ENCODE measurements at regions of chr3 and their contacts with region 1.

Region 1: DNA sequence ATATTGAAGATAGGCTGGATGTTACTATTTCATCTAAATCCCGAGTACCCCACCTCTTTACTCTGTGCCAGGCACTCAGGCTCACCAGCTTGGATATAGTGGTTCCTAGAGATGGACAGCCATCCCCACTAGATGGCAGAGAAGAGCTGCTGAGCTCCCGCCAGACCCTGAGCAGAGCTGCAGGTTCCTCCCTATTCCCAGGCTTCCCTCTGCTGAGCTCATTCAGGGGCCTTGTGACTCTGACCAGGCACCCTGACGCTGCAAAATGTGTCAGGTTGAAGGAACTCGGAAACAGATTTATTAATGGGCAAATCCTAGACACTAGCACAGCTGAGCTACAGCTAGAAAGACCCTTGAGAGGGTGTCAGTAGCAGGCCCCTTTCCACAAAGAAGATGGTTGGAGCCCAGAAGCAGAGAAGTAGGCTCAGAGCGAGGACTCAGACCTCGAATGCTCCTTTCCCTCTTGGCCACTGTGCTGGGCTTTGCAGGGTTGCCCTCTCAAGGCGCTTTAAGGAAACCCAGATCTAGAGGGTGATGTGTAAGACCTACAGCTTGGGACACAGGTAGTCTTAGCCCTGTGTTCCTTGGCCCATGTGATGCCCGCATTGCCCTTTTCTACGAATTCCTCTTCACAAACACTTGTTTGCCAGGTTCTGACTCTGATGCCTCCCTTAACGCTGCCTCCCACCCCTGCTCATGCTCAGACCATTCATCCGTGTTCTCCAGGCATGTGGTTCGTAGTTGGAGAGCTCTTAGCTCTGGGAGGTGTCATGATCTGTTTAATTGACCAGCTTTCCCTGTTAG is 38.0 kb upstream of the RHO start:
- DNase-seq: peak; percentile 76
- ATAC-seq: peak; percentile 99
- H3K4me3 ChIP-seq: no peak overlapping the region
- H3K4me3 Mint-ChIP-seq: no peak overlapping the region
- H3K27ac ChIP-seq: no peak overlapping the region
- H3K27ac Mint-ChIP-seq: no peak overlapping the region
- H3K4me1 ChIP-seq: peaks cover 0 to 3% of the 10 kb centered on the region in 2 donors
- H3K4me1 Mint-ChIP-seq: peaks cover 2% of the 10 kb centered on the region
- H3K27me3 ChIP-seq: no peaks in the 10 kb centered on the region
- H3K27me3 Mint-ChIP-seq: no peaks in the 10 kb centered on the region
- CTCF ChIP-seq: peak; percentile 87

Region 2: DNA sequence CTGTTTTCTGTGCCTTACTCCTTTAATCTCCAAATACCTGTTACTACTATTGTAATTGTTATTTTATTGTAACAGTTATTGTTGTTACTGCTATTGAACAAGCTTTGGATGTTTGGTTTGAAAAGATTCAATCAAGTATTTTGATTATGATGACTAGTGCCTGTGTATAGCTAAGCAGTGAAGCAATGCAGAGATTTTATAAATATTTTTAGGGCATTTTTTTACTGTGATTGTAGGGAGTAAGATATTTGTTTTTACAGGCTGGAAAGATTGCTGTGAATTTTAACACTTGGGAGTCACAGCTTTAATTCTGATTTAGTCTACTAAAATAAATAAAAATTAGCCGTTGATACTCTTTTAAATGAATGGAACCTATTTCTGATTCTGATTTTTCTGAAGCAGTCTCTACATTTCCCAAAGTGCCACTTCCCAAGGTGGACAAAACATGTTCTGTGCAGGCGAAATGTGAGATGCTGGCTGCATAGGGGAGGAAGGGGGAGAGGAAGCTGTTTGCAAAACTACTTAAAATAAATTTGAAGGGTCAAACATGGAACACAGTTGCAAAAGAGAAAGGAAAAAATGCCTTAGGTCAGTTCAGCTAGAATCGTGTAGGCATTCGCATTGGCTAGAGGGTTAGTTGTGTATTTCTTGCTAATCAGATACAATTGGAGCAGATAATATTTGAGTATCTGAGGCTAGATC is 1311.5 kb before region 1 on chr3:
- CTCF ChIA-PET with region 1: no interaction called
- POLR2A ChIA-PET with region 1: no interaction called
- intact Hi-C with region 1: no loop called
- DNase-seq: no peak
- ATAC-seq: no peak
- H3K4me3 ChIP-seq: no peak overlapping the region
- H3K4me3 Mint-ChIP-seq: no peak overlapping the region
- H3K27ac ChIP-seq: no peak overlapping the region
- H3K27ac Mint-ChIP-seq: no peak overlapping the region
- H3K4me1 ChIP-seq: peaks cover 4 to 5% of the 10 kb centered on the region in 2 donors
- H3K4me1 Mint-ChIP-seq: peaks cover 30% of the 10 kb centered on the region
- H3K27me3 ChIP-seq: no peaks in the 10 kb centered on the region
- H3K27me3 Mint-ChIP-seq: no peaks in the 10 kb centered on the region
- CTCF ChIP-seq: no peak

Region 3: DNA sequence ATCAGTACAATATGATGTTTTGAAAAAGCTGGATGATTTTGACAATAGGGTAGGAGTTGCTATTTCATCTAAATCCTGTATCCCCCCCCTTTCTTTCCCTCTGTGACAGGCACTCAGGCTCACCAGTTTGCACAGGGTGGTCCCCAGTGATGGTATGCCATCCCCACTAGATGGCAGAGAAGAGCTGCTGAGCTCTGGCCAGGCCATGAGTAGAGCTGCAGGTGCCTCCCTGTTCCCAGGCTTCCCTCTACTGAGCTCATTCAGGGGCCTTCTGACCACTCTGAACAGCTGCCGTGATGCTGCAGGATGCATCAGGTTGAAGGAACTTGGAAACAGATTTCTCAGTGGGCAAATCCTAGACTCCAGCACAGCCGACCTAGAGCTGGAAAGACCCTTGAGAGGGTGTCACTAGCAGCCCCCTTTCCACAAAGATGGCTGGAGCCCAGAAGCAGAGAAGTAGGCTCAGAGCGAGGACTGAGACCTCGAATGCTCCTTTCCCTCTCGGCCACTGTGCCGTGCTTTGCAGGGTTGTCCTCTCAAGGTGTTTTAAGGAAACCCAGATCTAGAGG is 107.1 kb before region 1 on chr3:
- CTCF ChIA-PET with region 1: interaction called, 23 read pairs
- POLR2A ChIA-PET with region 1: no interaction called
- intact Hi-C with region 1: no loop called
- DNase-seq: peak; percentile 61
- ATAC-seq: peak; percentile 93
- H3K4me3 ChIP-seq: no peak overlapping the region
- H3K4me3 Mint-ChIP-seq: no peak overlapping the region
- H3K27ac ChIP-seq: no peak overlapping the region
- H3K27ac Mint-ChIP-seq: no peak overlapping the region
- H3K4me1 ChIP-seq: no peaks in the 10 kb centered on the region
- H3K4me1 Mint-ChIP-seq: no peaks in the 10 kb centered on the region
- H3K27me3 ChIP-seq: no peaks in the 10 kb centered on the region
- H3K27me3 Mint-ChIP-seq: no peaks in the 10 kb centered on the region
- CTCF ChIP-seq: peak; percentile 78

Region 4: GRCh38 chr3:129576514-129577352 is 86.3 kb after region 1 on chr3:
- CTCF ChIA-PET with region 1: interaction called, 30 read pairs
- POLR2A ChIA-PET with region 1: no interaction called
- intact Hi-C with region 1: loop called (anchors 5 kb)
- DNase-seq: peak; percentile 85
- ATAC-seq: peak; percentile 71
- H3K4me3 ChIP-seq: peak overlapping the region in 1 of 5 experiments; percentile 40
- H3K4me3 Mint-ChIP-seq: peak overlapping the region; percentile 83
- H3K27ac ChIP-seq: peak overlapping the region; percentile 69 to 83
- H3K27ac Mint-ChIP-seq: peak overlapping the region; percentile 98
- H3K4me1 ChIP-seq: peaks cover 50 to 59% of the 10 kb centered on the region in 2 donors
- H3K4me1 Mint-ChIP-seq: peaks cover 70% of the 10 kb centered on the region
- H3K27me3 ChIP-seq: no peaks in the 10 kb centered on the region
- H3K27me3 Mint-ChIP-seq: no peaks in the 10 kb centered on the region
- CTCF ChIP-seq: no peak

Region 5: GRCh38 chr3:129606636-129607390 is 116.4 kb after region 1 on chr3 and contains the start of gene PLXND1:
- CTCF ChIA-PET with region 1: interaction called, 20 read pairs
- POLR2A ChIA-PET with region 1: interaction called, 3 read pairs
- intact Hi-C with region 1: loop called (anchors 1 kb)
- DNase-seq: peak; percentile 57
- ATAC-seq: peak; percentile 78
- H3K4me3 ChIP-seq: peak within 1 kb of the TSS in 4 of 5 experiments; percentile 48 to 55 (median 53)
- H3K4me3 Mint-ChIP-seq: peak within 1 kb of the TSS; percentile 95
- H3K27ac ChIP-seq: no peak within 1 kb of the TSS
- H3K27ac Mint-ChIP-seq: peak within 1 kb of the TSS; percentile 89
- H3K4me1 ChIP-seq: peaks cover 16 to 19% of the 10 kb centered on the region in 2 donors
- H3K4me1 Mint-ChIP-seq: peaks cover 18% of the 10 kb centered on the region
- H3K27me3 ChIP-seq: peaks cover 0 to 37% (median 14%) of the 10 kb centered on the region in 4 experiments
- H3K27me3 Mint-ChIP-seq: peaks cover 20% of the 10 kb centered on the region
- CTCF ChIP-seq: no peak
- total RNA-seq, gene PLXND1: 74.4 and 89.8 TPM in 2 replicates

Region 6: GRCh38 chr3:129650256-129650872 is 159.9 kb after region 1 on chr3:
- CTCF ChIA-PET with region 1: interaction called, 21 read pairs
- POLR2A ChIA-PET with region 1: no interaction called
- intact Hi-C with region 1: loop called (anchors 1 kb)
- DNase-seq: peak; percentile 65
- ATAC-seq: peak; percentile 43
- H3K4me3 ChIP-seq: no peak overlapping the region
- H3K4me3 Mint-ChIP-seq: no peak overlapping the region
- H3K27ac ChIP-seq: no peak overlapping the region
- H3K27ac Mint-ChIP-seq: no peak overlapping the region
- H3K4me1 ChIP-seq: no peaks in the 10 kb centered on the region
- H3K4me1 Mint-ChIP-seq: peaks cover 2% of the 10 kb centered on the region
- H3K27me3 ChIP-seq: no peaks in the 10 kb centered on the region
- H3K27me3 Mint-ChIP-seq: no peaks in the 10 kb centered on the region
- CTCF ChIP-seq: peak; percentile 79

Region 7: DNA sequence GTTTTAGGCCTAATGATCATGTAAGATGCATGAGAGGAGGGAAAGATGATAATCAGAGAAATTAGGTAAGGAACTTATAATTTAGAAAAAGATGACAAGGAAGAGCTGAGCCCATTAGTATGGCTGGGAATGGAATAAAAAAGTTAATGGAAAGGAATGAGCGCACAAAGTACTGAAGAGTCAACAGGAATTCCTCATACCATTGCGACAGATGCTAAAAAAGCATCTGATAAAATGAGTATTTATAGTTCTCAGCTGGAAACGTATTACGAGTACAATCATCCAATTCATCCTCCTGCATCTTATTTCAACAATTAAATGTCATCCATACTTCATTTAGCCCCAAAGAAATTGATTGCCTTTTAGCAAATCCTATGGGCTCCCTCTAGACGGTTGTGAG is 344.1 kb after region 1 on chr3:
- CTCF ChIA-PET with region 1: interaction called, 163 read pairs
- POLR2A ChIA-PET with region 1: no interaction called
- intact Hi-C with region 1: loop called (anchors 1 kb)
- DNase-seq: no peak
- ATAC-seq: no peak
- H3K4me3 ChIP-seq: no peak overlapping the region
- H3K4me3 Mint-ChIP-seq: no peak overlapping the region
- H3K27ac ChIP-seq: no peak overlapping the region
- H3K27ac Mint-ChIP-seq: no peak overlapping the region
- H3K4me1 ChIP-seq: no peaks in the 10 kb centered on the region
- H3K4me1 Mint-ChIP-seq: no peaks in the 10 kb centered on the region
- H3K27me3 ChIP-seq: no peaks in the 10 kb centered on the region
- H3K27me3 Mint-ChIP-seq: no peaks in the 10 kb centered on the region
- CTCF ChIP-seq: no peak